ENCODE measurements at regions of chr7 and their contacts with region 1.

Region 1: GRCh38 chr7:73606801-73607691 is 17.3 kb downstream of the MLXIPL start:
- DNase-seq: peak; percentile 37 to 82 (median 70)
- ATAC-seq: peak; percentile 85
- H3K4me3 ChIP-seq: no peak overlapping the region
- H3K4me3 Mint-ChIP-seq: no peak overlapping the region
- H3K27ac ChIP-seq: no peak overlapping the region
- H3K27ac Mint-ChIP-seq: no peak overlapping the region
- H3K4me1 ChIP-seq: peaks cover 7% of the 10 kb centered on the region
- H3K4me1 Mint-ChIP-seq: no peaks in the 10 kb centered on the region
- H3K27me3 ChIP-seq: peaks cover 0 to 8% of the 10 kb centered on the region in 2 experiments
- H3K27me3 Mint-ChIP-seq: peaks cover 22% of the 10 kb centered on the region
- CTCF ChIP-seq: peak; percentile 87

Region 2: DNA sequence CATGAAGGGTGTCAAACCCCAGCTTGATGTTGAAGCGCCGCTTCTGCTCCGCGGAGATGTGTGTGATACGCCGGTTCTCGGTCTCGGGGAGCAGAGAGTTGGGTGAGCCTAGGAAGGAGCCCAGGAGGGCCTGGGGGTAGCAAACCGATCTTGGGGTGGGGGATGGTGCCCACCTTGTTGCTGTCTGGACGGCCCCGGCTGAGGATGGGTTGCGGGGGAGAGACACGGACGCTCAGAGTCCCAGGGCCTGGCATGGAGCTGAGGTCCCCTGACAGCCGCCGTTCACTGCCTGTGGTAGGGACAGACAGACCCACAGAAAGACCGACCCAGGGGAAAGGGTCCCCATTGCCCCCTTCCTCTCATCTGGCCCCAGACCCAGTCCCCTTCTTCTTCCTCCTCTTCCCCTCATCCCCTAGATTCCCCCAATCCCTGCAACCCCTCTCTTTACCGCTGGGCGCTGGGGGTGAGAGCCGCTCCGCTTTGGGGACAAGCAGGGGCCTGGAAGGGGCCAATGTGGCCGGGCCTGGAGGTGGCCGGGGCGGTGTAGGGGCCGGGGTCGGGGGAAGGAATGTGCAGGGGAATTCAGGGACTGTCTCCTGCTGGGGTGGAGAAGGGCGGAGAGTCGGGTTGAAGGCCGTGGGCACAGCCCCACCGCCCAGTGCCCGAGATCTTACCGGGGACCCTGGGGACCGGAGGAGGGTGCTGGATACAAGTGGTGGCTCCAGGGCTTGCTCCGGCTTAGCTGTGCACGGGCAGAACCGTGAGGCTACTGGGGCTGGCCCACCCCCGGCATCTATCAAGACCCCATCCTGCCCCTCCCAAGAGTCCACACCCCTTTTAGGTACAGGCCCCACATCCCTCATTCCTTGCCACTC is 10.6 kb before region 1 on chr7:
- CTCF ChIA-PET with region 1: interaction called, 10 read pairs
- POLR2A ChIA-PET with region 1: no interaction called
- intact Hi-C with region 1: no loop called
- DNase-seq: no peak
- ATAC-seq: no peak
- H3K4me3 ChIP-seq: no peak overlapping the region
- H3K4me3 Mint-ChIP-seq: no peak overlapping the region
- H3K27ac ChIP-seq: no peak overlapping the region
- H3K27ac Mint-ChIP-seq: no peak overlapping the region
- H3K4me1 ChIP-seq: no peaks in the 10 kb centered on the region
- H3K4me1 Mint-ChIP-seq: no peaks in the 10 kb centered on the region
- H3K27me3 ChIP-seq: peaks cover 0 to 4% of the 10 kb centered on the region in 2 experiments
- H3K27me3 Mint-ChIP-seq: peaks cover 10% of the 10 kb centered on the region
- CTCF ChIP-seq: no peak

Region 3: GRCh38 chr7:73667344-73668102 is 60.5 kb after region 1 on chr7 and contains the start of gene VPS37D:
- CTCF ChIA-PET with region 1: interaction called, 14 read pairs
- POLR2A ChIA-PET with region 1: no interaction called
- intact Hi-C with region 1: loop called (anchors 1 to 2 kb)
- DNase-seq: peak; percentile 84 to 98 (median 93)
- ATAC-seq: peak; percentile 92
- H3K4me3 ChIP-seq: peak within 1 kb of the TSS; percentile 37 to 42
- H3K4me3 Mint-ChIP-seq: peak within 1 kb of the TSS; percentile 83
- H3K27ac ChIP-seq: no peak within 1 kb of the TSS
- H3K27ac Mint-ChIP-seq: no peak within 1 kb of the TSS
- H3K4me1 ChIP-seq: peaks cover 11% of the 10 kb centered on the region
- H3K4me1 Mint-ChIP-seq: peaks cover 7% of the 10 kb centered on the region
- H3K27me3 ChIP-seq: peaks cover 0 to 17% of the 10 kb centered on the region in 2 experiments
- H3K27me3 Mint-ChIP-seq: peaks cover 24% of the 10 kb centered on the region
- CTCF ChIP-seq: peak; percentile 62
- total RNA-seq, gene VPS37D: 0.89 to 1.3 TPM

Region 4: DNA sequence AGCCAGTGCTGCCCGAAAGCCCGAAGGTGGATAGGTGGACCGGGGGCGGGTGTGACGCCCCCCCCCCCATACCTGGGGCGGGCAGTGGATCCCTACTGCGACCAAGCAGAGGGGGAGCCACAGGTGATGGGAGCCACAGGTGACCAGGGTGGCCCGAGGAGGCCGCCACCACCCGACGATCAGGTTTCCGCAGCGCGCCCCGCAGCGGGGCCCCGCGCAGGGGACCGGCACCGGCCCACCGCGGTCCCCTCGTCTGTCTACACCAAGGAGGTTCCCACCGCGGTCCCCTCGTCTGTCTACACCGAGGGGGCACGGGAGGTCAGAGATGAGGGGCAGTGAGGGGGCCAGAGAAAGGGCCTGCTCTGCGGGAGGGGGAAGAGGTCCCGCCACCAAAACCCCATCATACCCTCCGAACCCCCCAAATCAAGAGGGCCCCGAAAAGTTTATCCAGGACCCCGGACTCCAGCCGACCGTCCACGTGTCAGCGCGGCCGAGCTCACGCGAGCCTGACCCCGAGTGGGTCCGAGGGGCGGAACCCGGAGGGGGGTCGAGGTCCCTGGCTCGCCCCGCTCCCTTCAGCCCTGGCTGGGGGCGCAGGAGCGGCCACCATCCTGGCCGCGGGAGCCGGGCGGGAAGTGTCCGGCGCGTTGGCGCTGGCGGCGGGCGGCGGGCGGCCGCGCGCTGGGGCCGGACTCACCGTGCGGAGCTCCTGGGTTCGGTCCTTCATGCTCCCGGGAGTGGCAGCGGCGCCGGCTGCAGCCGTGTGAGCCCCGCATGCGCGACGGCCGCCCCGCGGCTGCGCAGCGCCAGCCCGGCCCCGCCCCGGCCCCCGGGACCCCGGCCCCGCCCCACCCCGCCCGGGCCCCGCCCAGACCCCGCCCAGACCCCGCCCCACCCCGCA is 112.1 kb after region 1 on chr7 and contains the start of gene STX1A:
- CTCF ChIA-PET with region 1: interaction called, 145 read pairs
- POLR2A ChIA-PET with region 1: interaction called, 3 read pairs
- intact Hi-C with region 1: no loop called
- DNase-seq: peak; percentile 28 to 86 (median 69)
- ATAC-seq: peak; percentile 76
- H3K4me3 ChIP-seq: peak within 1 kb of the TSS; percentile 73 to 79
- H3K4me3 Mint-ChIP-seq: peak within 1 kb of the TSS; percentile 87
- H3K27ac ChIP-seq: no peak within 1 kb of the TSS
- H3K27ac Mint-ChIP-seq: no peak within 1 kb of the TSS
- H3K4me1 ChIP-seq: peaks cover 28% of the 10 kb centered on the region
- H3K4me1 Mint-ChIP-seq: peaks cover 22% of the 10 kb centered on the region
- H3K27me3 ChIP-seq: no peaks in the 10 kb centered on the region
- H3K27me3 Mint-ChIP-seq: no peaks in the 10 kb centered on the region
- CTCF ChIP-seq: no peak
- total RNA-seq, gene STX1A: 18.2 to 20.8 TPM

Region 5: GRCh38 chr7:73726083-73726466 is 119.0 kb after region 1 on chr7:
- CTCF ChIA-PET with region 1: interaction called, 145 read pairs
- POLR2A ChIA-PET with region 1: interaction called, 3 read pairs
- intact Hi-C with region 1: loop called (anchors 1 kb)
- DNase-seq: no peak
- ATAC-seq: peak; percentile 16
- H3K4me3 ChIP-seq: no peak overlapping the region
- H3K4me3 Mint-ChIP-seq: no peak overlapping the region
- H3K27ac ChIP-seq: no peak overlapping the region
- H3K27ac Mint-ChIP-seq: no peak overlapping the region
- H3K4me1 ChIP-seq: no peaks in the 10 kb centered on the region
- H3K4me1 Mint-ChIP-seq: no peaks in the 10 kb centered on the region
- H3K27me3 ChIP-seq: peaks cover 0 to 6% of the 10 kb centered on the region in 2 experiments
- H3K27me3 Mint-ChIP-seq: peaks cover 11% of the 10 kb centered on the region
- CTCF ChIP-seq: no peak

Region 6: DNA sequence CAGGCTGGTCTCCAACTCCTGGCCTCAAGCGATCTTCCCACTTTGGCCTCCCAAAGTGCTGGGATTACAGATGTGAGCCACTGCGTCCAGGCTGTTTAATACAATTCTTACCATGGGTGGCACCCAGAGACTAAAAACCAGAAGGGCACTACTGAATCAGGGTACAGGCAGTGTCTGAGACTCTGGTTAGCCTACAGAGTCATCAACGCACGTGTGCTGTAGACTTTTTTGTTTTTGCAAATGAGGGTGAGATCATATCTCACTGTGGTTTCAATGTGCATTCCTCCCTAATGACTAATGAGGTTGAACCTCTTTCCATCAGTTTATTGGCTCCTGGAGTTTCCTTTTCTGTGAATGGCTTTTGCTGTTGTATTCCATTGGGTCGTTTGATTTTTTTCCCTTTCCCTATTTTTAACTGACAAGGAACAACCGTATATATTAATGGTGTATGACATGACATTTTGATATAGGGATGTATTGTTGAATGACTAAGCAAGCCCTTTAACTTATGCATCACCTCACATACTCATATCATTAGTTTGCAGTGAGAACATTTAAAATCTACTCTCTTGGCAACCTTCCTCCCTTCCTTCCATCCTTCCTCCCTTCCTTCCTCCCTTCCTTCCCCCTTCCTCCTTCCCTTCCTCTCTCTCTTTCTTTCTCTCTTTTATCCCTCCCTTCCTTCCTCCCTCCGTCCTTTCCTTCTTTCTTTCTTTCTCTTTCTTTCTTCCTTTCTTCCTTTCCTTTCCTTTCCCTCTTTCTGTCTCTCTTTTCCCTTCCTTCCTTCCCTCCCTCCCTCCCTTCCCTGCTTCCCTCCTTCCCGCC is 244.6 kb after region 1 on chr7:
- CTCF ChIA-PET with region 1: interaction called, 23 read pairs
- POLR2A ChIA-PET with region 1: no interaction called
- intact Hi-C with region 1: loop called (anchors 1 kb)
- DNase-seq: peak in 3 of 9 experiments; percentile 24 to 34 (median 27)
- ATAC-seq: peak; percentile 65
- H3K4me3 ChIP-seq: no peak overlapping the region
- H3K4me3 Mint-ChIP-seq: no peak overlapping the region
- H3K27ac ChIP-seq: no peak overlapping the region
- H3K27ac Mint-ChIP-seq: no peak overlapping the region
- H3K4me1 ChIP-seq: no peaks in the 10 kb centered on the region
- H3K4me1 Mint-ChIP-seq: peaks cover 8% of the 10 kb centered on the region
- H3K27me3 ChIP-seq: peaks cover 0 to 3% of the 10 kb centered on the region in 2 experiments
- H3K27me3 Mint-ChIP-seq: peaks cover 16% of the 10 kb centered on the region
- CTCF ChIP-seq: no peak

Region 7: DNA sequence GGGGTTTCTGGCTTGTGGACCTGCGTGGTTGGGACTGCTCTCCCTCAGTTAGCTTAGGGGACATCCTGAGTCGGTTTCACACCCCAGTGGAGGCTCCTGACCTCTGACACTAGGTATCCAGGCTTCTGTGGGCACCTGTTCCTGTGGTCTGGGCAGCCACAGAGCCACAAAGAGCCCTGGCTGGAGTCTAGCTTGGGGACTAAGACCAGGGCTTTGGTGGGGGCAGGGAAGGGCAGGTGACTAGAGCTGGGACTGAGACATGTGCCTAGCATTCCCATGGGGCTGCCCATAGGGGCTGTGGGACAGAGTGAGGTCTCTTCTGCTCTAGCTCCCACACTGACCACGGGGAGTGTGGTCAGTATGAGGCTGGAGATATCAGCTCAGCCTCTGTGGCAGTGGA is 249.9 kb after region 1 on chr7:
- CTCF ChIA-PET with region 1: interaction called, 23 read pairs
- POLR2A ChIA-PET with region 1: no interaction called
- intact Hi-C with region 1: loop called (anchors 1 kb)
- DNase-seq: no peak
- ATAC-seq: no peak
- H3K4me3 ChIP-seq: no peak overlapping the region
- H3K4me3 Mint-ChIP-seq: no peak overlapping the region
- H3K27ac ChIP-seq: no peak overlapping the region
- H3K27ac Mint-ChIP-seq: no peak overlapping the region
- H3K4me1 ChIP-seq: no peaks in the 10 kb centered on the region
- H3K4me1 Mint-ChIP-seq: peaks cover 8% of the 10 kb centered on the region
- H3K27me3 ChIP-seq: peaks cover 0 to 3% of the 10 kb centered on the region in 2 experiments
- H3K27me3 Mint-ChIP-seq: peaks cover 24% of the 10 kb centered on the region
- CTCF ChIP-seq: no peak